AG04449 (cell line): ENCODE measurements at regions of chr9 and their contacts with region 1.

Region 1: GRCh38 chr9:77456829-77457437 is 191.2 kb downstream of the GNA14 start:
- DNase-seq: no peak
- H3K4me3 ChIP-seq: no peak overlapping the region
- CTCF ChIP-seq: peak; percentile 79

Region 2: DNA sequence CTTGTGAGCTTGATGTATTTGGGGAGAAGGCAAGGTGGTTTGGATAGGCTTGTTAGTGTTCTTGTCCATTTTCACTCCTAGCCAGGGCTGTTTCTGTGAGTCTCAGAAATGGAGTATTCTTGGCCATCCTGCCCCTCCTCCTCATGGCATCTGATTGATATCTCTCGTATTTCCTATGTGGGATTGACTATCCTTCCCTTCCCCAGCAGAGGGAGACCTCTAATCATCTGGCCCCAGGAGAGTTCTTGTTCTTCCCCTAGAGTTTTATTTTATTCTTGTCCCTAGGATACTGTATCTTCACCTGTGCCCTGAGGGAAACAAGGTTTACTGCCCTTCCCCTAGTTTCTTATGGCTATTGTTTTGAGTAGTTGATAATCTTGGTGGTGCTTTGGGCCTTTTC is 165.2 kb before region 1 on chr9:
- CTCF ChIA-PET with region 1: interaction called, 16 read pairs
- POLR2A ChIA-PET with region 1: no interaction called
- DNase-seq: no peak
- H3K4me3 ChIP-seq: no peak overlapping the region
- CTCF ChIP-seq: peak; percentile 55

Region 3: GRCh38 chr9:77433675-77434445 is 23.1 kb before region 1 on chr9:
- CTCF ChIA-PET with region 1: interaction called, 373 read pairs
- POLR2A ChIA-PET with region 1: no interaction called
- DNase-seq: no peak
- H3K4me3 ChIP-seq: no peak overlapping the region; the same call in 1 of the 2 replicates
- CTCF ChIP-seq: peak; percentile 98

Region 4: DNA sequence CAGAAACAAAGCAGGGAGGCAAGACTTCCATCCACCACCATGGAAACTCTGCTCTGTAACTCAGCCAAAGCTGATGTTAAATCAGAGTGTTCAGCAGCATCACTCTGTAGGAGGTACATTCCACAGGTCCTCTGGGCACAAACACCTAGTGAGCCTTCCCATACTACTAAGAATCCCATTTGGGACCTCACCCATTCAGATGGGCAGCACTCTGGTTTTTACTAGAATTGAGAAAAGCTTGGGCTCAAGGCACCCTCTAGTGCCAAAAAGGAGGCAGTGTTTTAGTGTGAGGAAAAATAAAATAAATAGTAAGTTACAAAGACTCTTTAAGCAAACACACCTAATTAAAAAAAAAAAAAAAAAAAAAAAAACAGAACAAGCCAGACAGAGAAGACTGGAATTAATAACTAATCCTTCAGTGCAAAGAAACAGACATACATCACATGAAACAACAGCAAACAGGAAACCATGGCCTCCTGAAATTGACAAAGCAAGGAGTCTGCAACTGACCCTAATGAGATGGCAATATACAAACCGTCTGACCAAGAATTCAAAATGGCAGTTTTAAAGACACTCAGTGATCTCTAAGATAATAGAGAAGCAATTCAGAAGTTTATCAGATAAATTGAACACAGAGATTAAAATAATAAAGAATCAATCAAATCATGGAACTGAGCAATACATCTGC is 31.6 kb after region 1 on chr9:
- CTCF ChIA-PET with region 1: interaction called, 123 read pairs
- POLR2A ChIA-PET with region 1: no interaction called
- DNase-seq: no peak
- H3K4me3 ChIP-seq: no peak overlapping the region
- CTCF ChIP-seq: peak; percentile 55

Region 5: DNA sequence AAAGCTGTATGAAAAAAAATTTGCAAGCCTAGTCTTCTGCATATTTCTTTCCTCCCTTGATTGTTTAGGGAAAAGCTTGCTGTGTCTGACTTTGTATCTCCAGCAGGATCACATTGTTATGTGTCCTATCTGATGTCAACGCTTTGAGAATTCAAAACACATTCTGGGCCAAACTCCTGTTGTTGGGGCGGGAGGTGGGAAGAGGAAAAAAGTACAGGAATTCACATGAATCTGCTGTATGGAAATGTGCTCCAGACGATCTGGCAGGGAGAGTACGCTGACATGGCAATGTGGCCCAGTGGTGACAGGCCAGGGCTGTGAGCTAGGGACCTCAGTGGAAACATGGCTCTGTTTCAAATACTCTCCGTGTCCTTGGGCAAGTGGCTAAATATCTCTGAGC is 278.6 kb after region 1 on chr9:
- CTCF ChIA-PET with region 1: interaction called, 13 read pairs
- POLR2A ChIA-PET with region 1: no interaction called
- DNase-seq: no peak
- H3K4me3 ChIP-seq: no peak overlapping the region
- CTCF ChIP-seq: no peak